ENCODE measurements at regions of chr4 and their contacts with region 1.

Region 1: GRCh38 chr4:54961357-54961975 is 163.9 kb downstream of the KDR start:
- DNase-seq: peak in 1 of 2 donors; percentile 53
- ATAC-seq: peak; percentile 40 to 60 (median 52)
- H3K4me3 ChIP-seq: no peak overlapping the region
- H3K4me3 Mint-ChIP-seq: no peak overlapping the region
- H3K27ac ChIP-seq: no peak overlapping the region
- H3K27ac Mint-ChIP-seq: peak overlapping the region in 1 of 2 donors; percentile 33
- H3K4me1 ChIP-seq: peaks cover 11% of the 10 kb centered on the region
- H3K4me1 Mint-ChIP-seq: peaks cover 26 to 35% of the 10 kb centered on the region in 2 donors
- H3K27me3 ChIP-seq: no peaks in the 10 kb centered on the region
- H3K27me3 Mint-ChIP-seq: no peaks in the 10 kb centered on the region
- CTCF ChIP-seq: peak; percentile 68

Region 2: GRCh38 chr4:54384563-54384962 is 576.9 kb before region 1 on chr4:
- intact Hi-C with region 1: loop called (anchors 1 kb)
- DNase-seq: peak in 1 of 2 donors; percentile 27
- ATAC-seq: peak in 2 of 3 donors; percentile 33 to 46
- H3K4me3 ChIP-seq: no peak overlapping the region
- H3K4me3 Mint-ChIP-seq: no peak overlapping the region
- H3K27ac ChIP-seq: no peak overlapping the region
- H3K27ac Mint-ChIP-seq: no peak overlapping the region
- H3K4me1 ChIP-seq: no peaks in the 10 kb centered on the region
- H3K4me1 Mint-ChIP-seq: no peaks in the 10 kb centered on the region
- H3K27me3 ChIP-seq: no peaks in the 10 kb centered on the region
- H3K27me3 Mint-ChIP-seq: no peaks in the 10 kb centered on the region
- CTCF ChIP-seq: no peak

Region 3: GRCh38 chr4:54566608-54567007 is 394.9 kb before region 1 on chr4:
- intact Hi-C with region 1: no loop called
- DNase-seq: peak in 1 of 2 donors; percentile 8
- ATAC-seq: peak in 1 of 3 donors; percentile 26
- H3K4me3 ChIP-seq: no peak overlapping the region
- H3K4me3 Mint-ChIP-seq: no peak overlapping the region
- H3K27ac ChIP-seq: no peak overlapping the region
- H3K27ac Mint-ChIP-seq: no peak overlapping the region
- H3K4me1 ChIP-seq: peaks cover 8% of the 10 kb centered on the region
- H3K4me1 Mint-ChIP-seq: peaks cover 5% of the 10 kb centered on the region in 2 donors
- H3K27me3 ChIP-seq: peaks cover 4% of the 10 kb centered on the region
- H3K27me3 Mint-ChIP-seq: peaks cover 4 to 6% of the 10 kb centered on the region in 2 donors
- CTCF ChIP-seq: no peak

Region 4: DNA sequence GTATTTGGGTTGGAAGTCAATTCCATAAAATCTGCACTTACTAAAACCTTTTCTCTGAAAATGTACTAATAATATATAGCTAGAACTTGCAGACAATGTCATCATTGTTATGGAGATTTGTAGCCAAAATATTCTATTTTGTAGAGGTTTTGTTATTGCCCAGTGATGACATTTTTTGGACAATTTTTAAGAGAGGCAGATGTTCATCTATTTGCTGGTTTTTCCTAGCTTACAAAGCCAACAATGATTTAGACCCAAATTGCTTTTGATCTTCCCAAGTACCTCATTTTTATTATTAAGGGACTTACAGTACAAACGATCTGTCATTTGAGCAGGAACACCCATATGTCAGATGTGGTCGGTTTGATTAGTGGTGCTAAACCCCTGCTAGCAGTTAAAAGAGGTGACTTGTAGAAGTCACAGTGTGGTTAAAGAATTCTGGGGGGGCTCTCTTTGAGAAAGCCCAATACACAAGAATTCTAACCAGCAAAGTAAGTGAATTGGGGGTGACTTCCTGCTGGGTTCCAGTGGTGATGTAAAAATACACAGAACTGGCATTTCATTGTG is 167.5 kb before region 1 on chr4:
- intact Hi-C with region 1: no loop called
- DNase-seq: peak in 1 of 2 donors; percentile 7
- ATAC-seq: peak; percentile 59 to 87 (median 70)
- H3K4me3 ChIP-seq: no peak overlapping the region
- H3K4me3 Mint-ChIP-seq: peak overlapping the region; percentile 36
- H3K27ac ChIP-seq: no peak overlapping the region
- H3K27ac Mint-ChIP-seq: peak overlapping the region; percentile 28 to 48
- H3K4me1 ChIP-seq: peaks cover 22% of the 10 kb centered on the region
- H3K4me1 Mint-ChIP-seq: peaks cover 49 to 54% of the 10 kb centered on the region in 2 donors
- H3K27me3 ChIP-seq: no peaks in the 10 kb centered on the region
- H3K27me3 Mint-ChIP-seq: no peaks in the 10 kb centered on the region
- CTCF ChIP-seq: no peak

Region 5: DNA sequence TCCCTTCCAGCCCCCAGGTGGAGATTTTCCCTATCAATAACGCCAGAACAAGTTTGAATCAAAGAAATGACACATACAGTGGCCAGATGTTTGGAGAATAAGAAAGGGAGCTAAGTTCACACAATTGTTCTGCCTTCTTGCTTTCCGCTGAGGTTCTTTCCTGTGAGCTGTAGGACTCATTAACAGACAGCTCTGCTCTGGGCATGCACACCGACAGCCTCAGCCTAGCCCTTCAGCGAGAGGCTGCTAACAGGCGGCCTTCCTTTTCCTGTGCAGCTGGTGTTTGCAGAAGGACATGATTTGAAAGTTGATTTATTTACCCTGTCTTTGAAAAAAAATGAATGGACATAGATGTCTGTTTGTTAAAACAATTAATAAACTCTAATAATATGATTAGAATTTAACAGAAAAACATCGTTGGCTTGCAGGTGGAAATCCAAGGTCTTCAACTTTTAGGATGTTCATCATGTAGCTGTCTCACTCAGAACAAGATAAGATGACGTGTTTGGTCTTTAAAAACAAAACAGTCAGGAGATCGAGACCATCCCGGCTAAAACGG is 19.4 kb before region 1 on chr4:
- intact Hi-C with region 1: loop called (anchors 2 kb)
- DNase-seq: peak; percentile 48 to 71
- ATAC-seq: peak; percentile 78 to 84 (median 79)
- H3K4me3 ChIP-seq: no peak overlapping the region
- H3K4me3 Mint-ChIP-seq: peak overlapping the region; percentile 81
- H3K27ac ChIP-seq: peak overlapping the region; percentile 56
- H3K27ac Mint-ChIP-seq: peak overlapping the region; percentile 77 to 88
- H3K4me1 ChIP-seq: peaks cover 27% of the 10 kb centered on the region
- H3K4me1 Mint-ChIP-seq: peaks cover 22 to 25% of the 10 kb centered on the region in 2 donors
- H3K27me3 ChIP-seq: no peaks in the 10 kb centered on the region
- H3K27me3 Mint-ChIP-seq: peaks cover 0 to 2% of the 10 kb centered on the region in 2 donors
- CTCF ChIP-seq: no peak

Region 6: GRCh38 chr4:55993994-55994663 is 1032.7 kb after region 1 on chr4:
- intact Hi-C with region 1: no loop called
- DNase-seq: no peak
- ATAC-seq: no peak
- H3K4me3 ChIP-seq: no peak overlapping the region
- H3K4me3 Mint-ChIP-seq: no peak overlapping the region
- H3K27ac ChIP-seq: no peak overlapping the region
- H3K27ac Mint-ChIP-seq: peak overlapping the region in 1 of 2 donors; percentile 47
- H3K4me1 ChIP-seq: no peaks in the 10 kb centered on the region
- H3K4me1 Mint-ChIP-seq: no peaks in the 10 kb centered on the region
- H3K27me3 ChIP-seq: no peaks in the 10 kb centered on the region
- H3K27me3 Mint-ChIP-seq: no peaks in the 10 kb centered on the region
- CTCF ChIP-seq: no peak

Region 7: GRCh38 chr4:56038487-56039148 is 1077.2 kb after region 1 on chr4:
- intact Hi-C with region 1: no loop called
- DNase-seq: no peak
- ATAC-seq: no peak
- H3K4me3 ChIP-seq: no peak overlapping the region
- H3K4me3 Mint-ChIP-seq: no peak overlapping the region
- H3K27ac ChIP-seq: no peak overlapping the region
- H3K27ac Mint-ChIP-seq: no peak overlapping the region
- H3K4me1 ChIP-seq: no peaks in the 10 kb centered on the region
- H3K4me1 Mint-ChIP-seq: no peaks in the 10 kb centered on the region
- H3K27me3 ChIP-seq: no peaks in the 10 kb centered on the region
- H3K27me3 Mint-ChIP-seq: peaks cover 3 to 8% of the 10 kb centered on the region in 2 donors
- CTCF ChIP-seq: no peak